CD4-positive, alpha-beta T cell (primary cell): ENCODE measurements at regions of chr5 and their contacts with region 1.

Region 1: GRCh38 chr5:96942911-96943310 is 7.0 kb downstream of the LNPEP start:
- DNase-seq: no peak
- ATAC-seq: no peak
- H3K4me3 ChIP-seq: no peak overlapping the region
- H3K4me3 Mint-ChIP-seq: no peak overlapping the region
- H3K27ac ChIP-seq: no peak overlapping the region
- H3K27ac Mint-ChIP-seq: no peak overlapping the region
- H3K4me1 ChIP-seq: peaks cover 47% of the 10 kb centered on the region
- H3K4me1 Mint-ChIP-seq: peaks cover 85% of the 10 kb centered on the region
- H3K27me3 ChIP-seq: no peaks in the 10 kb centered on the region
- H3K27me3 Mint-ChIP-seq: no peaks in the 10 kb centered on the region
- CTCF ChIP-seq: no peak

Region 2: DNA sequence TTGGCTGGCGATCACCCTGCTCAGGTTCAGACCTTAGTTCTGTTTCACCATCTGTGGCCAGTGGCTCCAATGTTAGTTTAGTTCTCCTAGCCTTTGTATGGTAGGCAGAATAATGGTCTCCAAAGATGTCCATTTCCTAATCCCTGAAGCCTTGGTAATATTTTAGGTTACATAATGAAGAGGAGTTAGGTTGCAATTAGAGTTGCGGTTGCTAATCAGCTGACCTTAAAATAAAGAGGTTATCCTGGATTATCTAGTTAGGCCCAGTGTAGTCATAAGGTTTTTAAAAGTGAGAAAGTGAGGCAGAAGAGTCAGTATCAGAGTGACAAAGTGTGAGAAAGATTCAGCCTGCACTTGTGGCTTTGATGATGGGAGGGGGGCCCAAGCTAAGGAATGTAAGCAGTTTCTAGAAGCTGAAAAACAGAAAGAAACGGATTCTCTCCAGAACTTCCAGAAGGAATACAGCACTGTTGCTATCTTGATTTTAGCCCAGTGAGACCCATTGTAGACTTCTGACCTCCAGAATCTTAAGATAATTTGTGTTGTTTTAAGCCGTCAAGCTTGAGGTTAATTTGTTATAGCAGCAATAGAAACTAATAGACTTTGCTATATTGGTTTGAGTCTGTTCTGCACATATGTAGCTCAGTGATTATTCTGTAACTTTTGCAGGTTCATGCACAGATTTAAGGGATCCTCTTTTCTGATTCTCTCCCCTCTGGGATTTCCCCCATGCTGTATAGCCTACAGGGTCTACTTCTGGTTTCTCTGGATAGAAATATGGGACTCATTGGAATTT is 14.5 kb after region 1 on chr5:
- CTCF ChIA-PET with region 1: interaction called, 3 read pairs
- POLR2A ChIA-PET with region 1: interaction called, 59 read pairs
- intact Hi-C with region 1: loop called (anchors 1 to 2 kb)
- DNase-seq: peak in 3 of 14 experiments; percentile 22 to 42 (median 27)
- ATAC-seq: no peak
- H3K4me3 ChIP-seq: peak overlapping the region; percentile 1
- H3K4me3 Mint-ChIP-seq: peak overlapping the region; percentile 79
- H3K27ac ChIP-seq: peak overlapping the region; percentile 27 to 48
- H3K27ac Mint-ChIP-seq: peak overlapping the region; percentile 88
- H3K4me1 ChIP-seq: peaks cover 45% of the 10 kb centered on the region
- H3K4me1 Mint-ChIP-seq: peaks cover 83% of the 10 kb centered on the region
- H3K27me3 ChIP-seq: no peaks in the 10 kb centered on the region
- H3K27me3 Mint-ChIP-seq: no peaks in the 10 kb centered on the region
- CTCF ChIP-seq: no peak

Region 3: DNA sequence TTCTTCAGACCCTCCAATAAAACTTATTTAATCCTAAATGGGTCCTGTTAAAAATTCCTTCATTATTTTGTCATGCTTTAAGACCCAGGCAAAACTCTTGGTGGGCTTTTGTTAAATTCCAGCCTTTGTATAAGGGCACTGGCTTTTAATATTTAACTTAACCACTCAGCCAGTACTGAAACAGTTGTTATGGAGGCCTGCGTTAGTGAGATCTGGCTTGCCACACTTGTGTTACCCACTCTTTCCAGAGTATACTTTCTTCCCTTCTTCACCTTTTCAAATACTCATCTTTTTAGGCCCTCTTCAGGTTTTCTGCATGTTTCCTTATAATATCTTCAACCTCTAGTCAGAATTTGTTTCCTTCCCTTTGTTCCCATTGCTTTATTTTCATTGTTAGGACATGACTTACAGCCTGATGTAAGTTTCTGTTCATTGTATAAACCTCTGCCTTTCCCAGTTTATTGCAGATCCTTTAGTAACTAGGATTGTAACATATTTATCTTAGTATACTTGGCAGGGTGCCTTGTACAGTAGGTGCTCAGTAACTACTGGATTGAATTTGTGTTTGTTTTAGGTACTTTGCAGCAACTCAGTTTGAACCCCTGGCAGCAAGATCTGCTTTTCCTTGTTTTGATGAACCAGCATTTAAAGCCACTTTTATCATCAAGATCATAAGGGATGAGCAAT is 41.7 kb after region 1 on chr5:
- CTCF ChIA-PET with region 1: no interaction called
- POLR2A ChIA-PET with region 1: no interaction called
- intact Hi-C with region 1: loop called in 1 of 2 experiments (anchors 5 kb)
- DNase-seq: no peak
- ATAC-seq: no peak
- H3K4me3 ChIP-seq: no peak overlapping the region
- H3K4me3 Mint-ChIP-seq: no peak overlapping the region
- H3K27ac ChIP-seq: no peak overlapping the region
- H3K27ac Mint-ChIP-seq: no peak overlapping the region
- H3K4me1 ChIP-seq: peaks cover 3% of the 10 kb centered on the region
- H3K4me1 Mint-ChIP-seq: peaks cover 55% of the 10 kb centered on the region
- H3K27me3 ChIP-seq: no peaks in the 10 kb centered on the region
- H3K27me3 Mint-ChIP-seq: no peaks in the 10 kb centered on the region
- CTCF ChIP-seq: no peak